Posterior vena cava (tissue), 2 donors: ENCODE measurements at regions of chr3 and their contacts with region 1.

Region 1: DNA sequence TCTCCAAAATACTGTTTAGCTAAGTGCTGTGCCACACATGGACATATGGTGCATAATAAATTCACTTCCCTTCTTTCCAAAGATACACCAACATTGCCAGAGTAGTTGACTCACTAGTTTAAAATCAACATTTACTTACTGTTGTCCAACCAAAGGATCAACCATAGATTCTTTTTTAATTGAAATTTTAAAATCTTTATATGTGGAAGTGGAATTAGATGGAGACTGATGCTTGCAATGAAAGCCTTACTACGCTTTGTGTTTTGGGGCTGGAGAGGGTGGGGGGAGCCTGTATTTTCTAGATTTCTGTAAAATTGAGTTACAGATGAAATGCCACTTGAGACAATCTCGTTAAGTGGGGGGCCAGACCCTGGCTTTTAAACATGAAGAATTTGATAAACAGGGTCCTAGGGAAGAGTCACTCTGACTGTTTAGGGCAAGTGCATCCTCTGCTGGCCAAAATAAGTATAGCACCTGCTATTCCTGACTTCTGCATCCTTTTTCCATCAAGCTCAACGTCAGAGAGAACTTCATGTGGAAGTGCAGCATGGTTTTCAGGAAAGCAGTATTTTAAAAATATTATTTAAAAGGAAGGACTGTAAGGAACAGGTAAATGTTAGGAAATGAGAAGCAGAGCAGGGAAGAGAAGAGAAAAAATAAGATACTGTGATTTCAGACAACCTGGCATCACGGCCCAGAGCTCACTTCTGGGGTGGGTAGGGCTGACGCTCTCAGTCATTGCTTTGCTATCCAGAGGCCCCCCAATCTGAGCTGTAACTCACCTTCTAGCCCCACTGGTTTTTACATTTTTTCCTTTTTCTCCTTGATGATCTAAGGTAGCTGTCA is 76.7 kb downstream of the BOC start:
- DNase-seq: no peak

Region 2: GRCh38 chr3:112446343-112446742 is 841.7 kb before region 1 on chr3:
- intact Hi-C with region 1: no loop called
- DNase-seq: no peak

Region 3: GRCh38 chr3:112873632-112874031 is 414.4 kb before region 1 on chr3:
- intact Hi-C with region 1: no loop called
- DNase-seq: no peak

Region 4: GRCh38 chr3:113051302-113051711 is 236.7 kb before region 1 on chr3:
- intact Hi-C with region 1: loop called in 1 of 2 experiments (anchors 2 kb)
- DNase-seq: peak; percentile 91

Region 5: GRCh38 chr3:113063126-113063909 is 224.7 kb before region 1 on chr3:
- intact Hi-C with region 1: loop called in 1 of 2 experiments (anchors 10 kb)
- DNase-seq: no peak